ENCODE measurements at regions of chr20 and their contacts with region 1.

Region 1: GRCh38 chr20:4488407-4489339 is 233.0 kb upstream of the PRND start:
- DNase-seq: peak in 1 of 2 donors; percentile 71
- H3K4me3 ChIP-seq: no peak overlapping the region
- H3K27ac ChIP-seq: peak overlapping the region; percentile 24 to 33
- H3K4me1 ChIP-seq: peaks cover 0 to 6% of the 10 kb centered on the region in 2 donors
- H3K27me3 ChIP-seq: no peaks in the 10 kb centered on the region
- CTCF ChIP-seq: no peak

Region 2: DNA sequence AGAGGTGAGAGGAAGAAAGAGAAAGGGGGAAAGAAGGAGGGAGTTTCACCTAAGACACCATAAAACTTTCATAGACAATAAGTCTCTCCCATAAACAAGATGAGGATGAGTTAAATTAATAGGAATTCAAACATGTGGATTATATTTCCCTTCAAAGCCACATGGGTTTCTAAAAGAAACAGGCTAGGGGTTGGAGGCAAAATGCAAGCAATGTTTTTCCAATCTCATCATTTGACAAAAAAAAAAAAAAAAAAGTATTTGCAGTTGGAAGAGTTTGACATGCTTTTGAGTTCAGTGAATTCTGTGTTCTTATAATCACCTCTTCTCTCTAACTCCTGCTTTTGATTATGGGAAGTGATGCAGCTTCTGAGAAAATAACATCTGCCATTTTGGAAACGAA is 53.4 kb before region 1 on chr20:
- intact Hi-C with region 1: loop called (anchors 5 kb)
- DNase-seq: no peak
- H3K4me3 ChIP-seq: no peak overlapping the region
- H3K27ac ChIP-seq: no peak overlapping the region
- H3K4me1 ChIP-seq: no peaks in the 10 kb centered on the region
- H3K27me3 ChIP-seq: no peaks in the 10 kb centered on the region
- CTCF ChIP-seq: no peak

Measured in ascending aorta (tissue), 2 donors.